ENCODE measurements at regions of chr7 and their contacts with region 1.

Region 1: DNA sequence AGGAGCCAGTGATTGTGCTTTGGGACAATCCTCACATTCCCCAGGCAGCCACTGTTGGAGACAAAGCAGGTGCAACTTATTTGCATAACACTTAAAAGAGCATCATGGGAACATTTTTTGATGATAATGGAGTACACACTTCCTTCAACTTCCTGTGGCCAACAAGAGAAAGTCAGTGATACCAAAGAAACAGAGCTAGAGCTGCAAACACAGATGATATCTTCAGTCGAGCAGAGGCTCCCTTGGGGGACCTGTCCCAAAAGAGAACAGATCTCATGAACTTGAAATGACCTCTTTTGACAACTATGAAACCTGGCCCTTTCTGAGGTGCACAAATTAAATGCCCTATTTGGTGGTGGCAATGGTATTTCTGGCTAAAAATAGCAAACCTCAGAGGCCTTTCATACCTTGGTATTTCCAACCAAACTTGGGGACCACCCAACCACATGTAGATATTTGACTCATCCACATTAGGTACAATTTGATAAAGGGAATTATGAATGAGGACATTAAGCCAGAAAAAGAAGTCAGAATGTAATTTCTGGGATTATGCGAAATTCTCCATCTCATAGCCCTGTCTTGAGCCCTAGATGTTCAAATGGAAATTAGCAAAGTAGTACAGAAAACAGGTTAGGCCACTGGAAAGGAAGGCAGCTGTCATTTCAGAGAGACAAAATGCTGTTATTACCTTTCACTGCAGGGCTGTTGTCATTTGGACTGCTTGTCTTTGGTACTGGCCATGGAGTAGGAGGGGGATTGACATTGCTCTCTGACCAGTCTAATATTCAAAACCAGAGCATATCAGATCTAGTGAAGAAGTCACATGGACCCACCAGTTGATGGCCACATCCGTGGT is 146.2 kb downstream of the ICA1 start:
- DNase-seq: peak in 2 of 10 donors; percentile 24 to 32
- ATAC-seq: peak; percentile 62 to 74
- H3K4me3 Mint-ChIP-seq: peak overlapping the region in 9 of 10 donors; percentile 17 to 74 (median 49)
- H3K27ac Mint-ChIP-seq: peak overlapping the region; percentile 80 to 94 (median 88)
- H3K4me1 Mint-ChIP-seq: peaks cover 25 to 55% (median 44%) of the 10 kb centered on the region in 4 donors
- H3K27me3 Mint-ChIP-seq: no peaks in the 10 kb centered on the region

Region 2: DNA sequence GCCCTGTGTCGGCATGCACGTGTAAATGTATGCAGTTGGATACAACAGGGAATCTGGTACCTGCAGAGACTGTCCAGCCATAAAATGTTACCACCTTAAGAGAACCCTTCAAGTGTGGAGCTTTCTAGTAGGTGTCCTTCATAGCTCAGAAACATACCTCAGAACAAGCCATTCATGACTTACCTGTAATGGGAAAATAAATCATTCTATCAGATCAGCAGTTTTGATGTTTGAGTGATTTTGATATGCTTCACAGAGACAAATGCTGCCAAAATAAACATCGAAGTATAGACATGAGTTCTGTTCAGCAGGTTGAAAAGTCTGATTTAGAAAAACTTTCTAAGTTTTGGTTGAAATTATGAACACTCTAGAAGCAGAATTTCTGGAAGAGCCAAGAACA is 508.8 kb before region 1 on chr7:
- POLR2A ChIA-PET with region 1: no interaction called
- DNase-seq: no peak
- ATAC-seq: no peak
- H3K4me3 Mint-ChIP-seq: no peak overlapping the region
- H3K27ac Mint-ChIP-seq: peak overlapping the region in 1 of 10 donors; percentile 6
- H3K4me1 Mint-ChIP-seq: no peaks in the 10 kb centered on the region
- H3K27me3 Mint-ChIP-seq: no peaks in the 10 kb centered on the region

Region 3: GRCh38 chr7:8094164-8095140 is 21.3 kb before region 1 on chr7:
- POLR2A ChIA-PET with region 1: no interaction called
- DNase-seq: no peak
- ATAC-seq: no peak
- H3K4me3 Mint-ChIP-seq: no peak overlapping the region
- H3K27ac Mint-ChIP-seq: no peak overlapping the region
- H3K4me1 Mint-ChIP-seq: peaks cover 0 to 6% (median 1%) of the 10 kb centered on the region in 4 donors
- H3K27me3 Mint-ChIP-seq: no peaks in the 10 kb centered on the region

Region 4: DNA sequence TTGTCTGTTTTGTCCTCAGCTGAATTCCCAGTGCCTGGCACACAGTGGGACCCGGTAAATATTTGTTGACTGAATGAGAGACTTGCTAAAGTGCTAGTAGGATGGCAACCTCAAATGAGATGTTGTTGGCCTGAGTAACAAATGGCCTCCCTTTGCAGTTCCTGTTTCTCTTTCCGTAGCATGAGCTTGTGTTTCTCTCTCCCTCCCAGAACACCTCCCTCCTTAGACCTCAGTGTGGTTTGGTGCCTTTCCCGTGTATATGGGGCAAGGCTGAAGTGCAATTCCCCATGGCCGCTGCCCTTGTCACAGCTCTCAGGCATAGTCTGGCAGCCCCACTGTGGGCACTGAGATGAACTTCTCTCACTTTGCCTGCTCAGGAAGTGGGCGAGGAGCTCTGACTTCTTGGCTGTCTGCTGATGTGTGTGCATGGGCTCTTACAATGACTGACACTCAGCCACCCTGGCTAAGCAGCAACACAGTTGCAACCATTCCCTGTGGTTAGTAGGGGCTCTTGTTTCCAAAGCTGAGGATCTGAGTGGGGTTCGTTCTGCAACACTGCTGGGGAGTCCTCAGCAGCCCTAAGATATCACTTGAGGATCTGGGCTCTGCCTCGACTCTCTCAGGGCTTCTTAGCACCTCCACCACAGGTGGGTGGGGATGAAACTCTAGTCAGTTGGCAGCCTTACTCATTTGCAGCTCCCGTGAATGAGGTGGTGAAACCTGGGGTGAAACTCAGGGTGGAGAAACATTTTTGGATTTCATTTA is 10.1 kb after region 1 on chr7:
- POLR2A ChIA-PET with region 1: interaction called, 11 read pairs
- DNase-seq: peak; percentile 36 to 88 (median 77)
- ATAC-seq: peak; percentile 97
- H3K4me3 Mint-ChIP-seq: peak overlapping the region; percentile 41 to 83 (median 76)
- H3K27ac Mint-ChIP-seq: peak overlapping the region; percentile 94 to 100 (median 98)
- H3K4me1 Mint-ChIP-seq: peaks cover 34 to 82% (median 72%) of the 10 kb centered on the region in 4 donors
- H3K27me3 Mint-ChIP-seq: no peaks in the 10 kb centered on the region

Region 5: DNA sequence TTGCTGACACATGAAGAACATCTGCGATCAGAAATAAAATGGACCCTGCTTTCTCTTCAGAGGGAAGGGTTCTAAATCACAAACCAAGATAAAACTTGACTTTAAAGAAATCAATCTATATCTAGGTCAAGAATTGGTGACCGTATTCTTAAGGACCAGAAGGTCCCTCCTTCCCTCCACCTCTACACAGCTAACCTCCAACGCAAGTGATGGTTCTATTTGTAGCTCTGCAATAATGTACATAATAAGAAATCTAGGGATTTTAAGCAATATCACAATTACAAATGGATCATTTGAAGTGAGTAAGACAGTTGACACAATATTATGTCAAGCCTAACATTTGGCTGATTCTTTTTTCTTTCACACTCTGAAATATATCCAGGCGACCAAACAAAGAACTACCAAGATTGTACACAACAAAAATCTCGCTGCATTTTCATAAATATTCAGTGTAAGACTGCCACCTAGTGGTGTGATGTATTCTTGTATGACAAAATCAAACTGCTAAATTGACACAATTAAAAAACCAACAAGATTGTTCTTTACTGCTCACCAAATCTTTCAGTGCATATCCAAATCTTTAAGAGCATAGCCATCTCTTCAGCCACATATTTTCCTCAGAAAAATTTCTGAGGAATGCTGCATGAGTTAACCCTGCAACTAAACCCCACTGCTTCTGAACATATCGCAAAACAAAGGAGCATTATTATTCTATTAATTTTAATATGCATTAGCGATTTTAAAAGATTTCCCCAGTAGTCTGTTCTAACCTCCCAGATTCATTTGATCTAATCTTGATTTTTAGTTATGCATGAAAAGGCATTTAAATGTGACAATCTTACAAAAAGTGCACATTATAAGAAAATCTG is 101.7 kb after region 1 on chr7:
- POLR2A ChIA-PET with region 1: no interaction called
- DNase-seq: peak in 6 of 10 donors; percentile 11 to 76 (median 60)
- ATAC-seq: peak; percentile 63 to 65
- H3K4me3 Mint-ChIP-seq: no peak overlapping the region
- H3K27ac Mint-ChIP-seq: peak overlapping the region in 1 of 10 donors; percentile 34
- H3K4me1 Mint-ChIP-seq: peaks cover 0 to 2% (median 2%) of the 10 kb centered on the region in 4 donors
- H3K27me3 Mint-ChIP-seq: no peaks in the 10 kb centered on the region